ENCODE measurements at regions of chr15 and their contacts with region 1.

Region 1: DNA sequence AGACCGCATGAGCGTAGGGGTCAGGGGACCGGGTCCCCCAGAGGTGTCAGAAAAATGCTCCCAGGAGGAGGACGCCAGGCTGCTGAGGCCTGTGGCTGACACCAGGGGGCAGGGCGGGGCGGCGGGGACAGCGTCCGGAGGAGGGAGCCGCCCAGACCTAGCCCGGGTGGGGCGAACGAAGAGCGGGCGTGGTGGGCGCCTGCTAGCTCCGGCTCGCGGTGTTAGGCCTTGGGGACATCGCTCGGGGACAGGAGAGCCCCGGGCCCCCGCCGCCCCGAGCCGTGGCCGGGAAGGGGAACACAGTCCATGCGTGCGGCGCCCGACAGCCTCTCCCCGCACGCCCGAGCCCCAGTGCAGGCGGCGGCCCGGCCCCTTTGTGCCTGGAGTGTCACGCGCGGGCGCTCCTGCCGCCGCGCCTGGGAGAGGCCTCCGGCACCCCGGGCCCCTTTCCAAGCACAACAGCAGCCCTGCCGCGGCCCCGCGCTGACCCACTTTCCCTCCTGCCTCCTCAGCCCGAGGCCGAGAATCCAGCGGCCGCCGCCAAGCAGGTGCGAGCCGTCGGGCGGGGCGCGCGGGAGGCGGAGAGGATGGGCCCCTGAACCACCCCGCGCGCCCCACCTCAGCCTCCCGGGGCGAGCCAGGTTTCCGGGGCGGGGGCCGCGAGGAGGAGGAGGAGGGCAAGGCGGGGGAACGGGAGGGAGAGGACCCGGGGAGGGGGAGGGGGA is 111.0 kb upstream of the KLF13 start:
- DNase-seq: peak; percentile 53 to 84 (median 69)
- ATAC-seq: peak; percentile 84
- H3K4me3 ChIP-seq: peak overlapping the region; percentile 30
- H3K4me3 Mint-ChIP-seq: peak overlapping the region; percentile 50 to 90 (median 74)
- H3K27ac ChIP-seq: peak overlapping the region; percentile 76
- H3K27ac Mint-ChIP-seq: peak overlapping the region; percentile 84 to 91 (median 87)
- H3K4me1 ChIP-seq: peaks cover 11 to 14% of the 10 kb centered on the region in 2 donors
- H3K4me1 Mint-ChIP-seq: peaks cover 5 to 54% (median 41%) of the 10 kb centered on the region in 7 donors
- H3K27me3 ChIP-seq: no peaks in the 10 kb centered on the region
- H3K27me3 Mint-ChIP-seq: no peaks in the 10 kb centered on the region

Region 2: GRCh38 chr15:30859091-30859874 is 356.4 kb before region 1 on chr15:
- CTCF ChIA-PET with region 1: no interaction called
- POLR2A ChIA-PET with region 1: no interaction called
- intact Hi-C with region 1: no loop called
- DNase-seq: peak in 6 of 9 donors; percentile 13 to 44 (median 36)
- ATAC-seq: peak; percentile 60
- H3K4me3 ChIP-seq: no peak overlapping the region
- H3K4me3 Mint-ChIP-seq: no peak overlapping the region
- H3K27ac ChIP-seq: no peak overlapping the region
- H3K27ac Mint-ChIP-seq: no peak overlapping the region
- H3K4me1 ChIP-seq: no peaks in the 10 kb centered on the region
- H3K4me1 Mint-ChIP-seq: peaks cover 4 to 14% (median 9%) of the 10 kb centered on the region in 7 donors
- H3K27me3 ChIP-seq: no peaks in the 10 kb centered on the region
- H3K27me3 Mint-ChIP-seq: no peaks in the 10 kb centered on the region

Region 3: GRCh38 chr15:31200735-31201151 is 14.9 kb before region 1 on chr15:
- CTCF ChIA-PET with region 1: interaction called, 32 read pairs
- POLR2A ChIA-PET with region 1: interaction called, 9 read pairs
- intact Hi-C with region 1: loop called in 1 of 2 experiments (anchors 1 kb)
- DNase-seq: peak; percentile 45 to 81 (median 72)
- ATAC-seq: peak; percentile 77
- H3K4me3 ChIP-seq: no peak overlapping the region
- H3K4me3 Mint-ChIP-seq: no peak overlapping the region
- H3K27ac ChIP-seq: no peak overlapping the region
- H3K27ac Mint-ChIP-seq: peak overlapping the region in 3 of 9 donors; percentile 4 to 77 (median 38)
- H3K4me1 ChIP-seq: peaks cover 0 to 31% of the 10 kb centered on the region in 2 donors
- H3K4me1 Mint-ChIP-seq: peaks cover 10 to 48% (median 36%) of the 10 kb centered on the region in 7 donors
- H3K27me3 ChIP-seq: no peaks in the 10 kb centered on the region
- H3K27me3 Mint-ChIP-seq: peaks cover 0 to 33% (median 0%) of the 10 kb centered on the region in 5 donors

Region 4: GRCh38 chr15:31228985-31229826 is 13.6 kb after region 1 on chr15:
- CTCF ChIA-PET with region 1: interaction called, 3 read pairs
- POLR2A ChIA-PET with region 1: interaction called, 5 read pairs
- intact Hi-C with region 1: loop called in 1 of 2 experiments (anchors 1 kb)
- DNase-seq: no peak
- ATAC-seq: peak; percentile 46
- H3K4me3 ChIP-seq: no peak overlapping the region
- H3K4me3 Mint-ChIP-seq: no peak overlapping the region
- H3K27ac ChIP-seq: no peak overlapping the region
- H3K27ac Mint-ChIP-seq: no peak overlapping the region
- H3K4me1 ChIP-seq: peaks cover 0 to 6% of the 10 kb centered on the region in 2 donors
- H3K4me1 Mint-ChIP-seq: peaks cover 11 to 28% (median 13%) of the 10 kb centered on the region in 7 donors
- H3K27me3 ChIP-seq: no peaks in the 10 kb centered on the region
- H3K27me3 Mint-ChIP-seq: peaks cover 0 to 23% (median 0%) of the 10 kb centered on the region in 5 donors

Region 5: GRCh38 chr15:31241888-31242522 is 26.4 kb after region 1 on chr15:
- CTCF ChIA-PET with region 1: interaction called, 4 read pairs
- POLR2A ChIA-PET with region 1: interaction called, 6 read pairs
- intact Hi-C with region 1: loop called (anchors 1 kb)
- DNase-seq: peak in 5 of 9 donors; percentile 47 to 78 (median 65)
- ATAC-seq: peak; percentile 95
- H3K4me3 ChIP-seq: no peak overlapping the region
- H3K4me3 Mint-ChIP-seq: peak overlapping the region; percentile 2 to 74 (median 50)
- H3K27ac ChIP-seq: peak overlapping the region; percentile 32
- H3K27ac Mint-ChIP-seq: peak overlapping the region; percentile 36 to 97 (median 90)
- H3K4me1 ChIP-seq: peaks cover 13 to 28% of the 10 kb centered on the region in 2 donors
- H3K4me1 Mint-ChIP-seq: peaks cover 34 to 49% (median 42%) of the 10 kb centered on the region in 7 donors
- H3K27me3 ChIP-seq: no peaks in the 10 kb centered on the region
- H3K27me3 Mint-ChIP-seq: peaks cover 0 to 3% (median 0%) of the 10 kb centered on the region in 5 donors

Region 6: GRCh38 chr15:31280046-31280830 is 64.6 kb after region 1 on chr15:
- CTCF ChIA-PET with region 1: no interaction called
- POLR2A ChIA-PET with region 1: no interaction called
- intact Hi-C with region 1: no loop called
- DNase-seq: peak in 2 of 9 donors; percentile 1 to 12
- ATAC-seq: no peak
- H3K4me3 ChIP-seq: no peak overlapping the region
- H3K4me3 Mint-ChIP-seq: no peak overlapping the region
- H3K27ac ChIP-seq: no peak overlapping the region
- H3K27ac Mint-ChIP-seq: peak overlapping the region in 3 of 9 donors; percentile 28 to 73 (median 41)
- H3K4me1 ChIP-seq: no peaks in the 10 kb centered on the region
- H3K4me1 Mint-ChIP-seq: peaks cover 0 to 30% (median 16%) of the 10 kb centered on the region in 7 donors
- H3K27me3 ChIP-seq: no peaks in the 10 kb centered on the region
- H3K27me3 Mint-ChIP-seq: peaks cover 0 to 25% (median 0%) of the 10 kb centered on the region in 5 donors

Region 7: DNA sequence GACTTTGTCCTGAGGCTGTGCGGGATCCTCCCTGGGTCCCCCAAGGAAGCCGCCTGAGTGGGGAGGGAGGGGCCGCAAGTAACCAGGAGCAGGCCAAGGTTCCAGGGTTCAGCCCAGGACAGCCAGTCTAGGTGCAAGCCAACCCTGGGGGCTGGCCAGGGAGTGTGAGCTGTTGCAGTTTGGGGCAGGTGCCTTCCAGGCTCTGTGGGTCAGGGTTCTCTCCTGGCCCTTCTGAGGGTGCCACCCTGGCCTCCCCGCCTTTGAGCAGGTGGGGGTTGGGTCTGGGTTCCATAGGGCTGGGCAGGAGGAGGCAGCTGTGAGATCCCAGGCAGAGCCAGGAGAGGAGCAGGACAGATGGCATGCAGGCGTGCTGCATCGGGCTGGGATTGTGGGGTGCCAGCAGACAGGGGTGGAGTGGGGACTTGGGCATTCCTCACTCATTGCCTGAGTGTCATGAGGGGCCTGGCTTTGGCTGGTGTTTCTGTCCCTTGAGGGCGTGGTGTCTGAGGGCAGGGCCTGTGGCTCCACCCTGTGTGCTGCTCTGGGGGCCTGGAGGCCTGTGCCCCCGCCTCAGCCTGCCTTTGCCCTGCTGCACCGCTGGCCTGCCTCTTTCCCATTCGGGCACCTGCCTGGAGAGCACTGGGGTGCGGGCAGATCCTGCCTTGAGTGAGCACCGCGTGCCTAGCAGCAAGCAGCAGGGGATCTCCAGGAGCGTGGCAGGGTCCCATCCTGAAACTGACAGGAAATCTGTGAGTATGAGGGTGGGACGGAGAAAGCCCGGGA is 129.4 kb after region 1 on chr15:
- CTCF ChIA-PET with region 1: no interaction called
- POLR2A ChIA-PET with region 1: interaction called, 4 read pairs
- intact Hi-C with region 1: loop called in 1 of 2 experiments (anchors 2 kb)
- DNase-seq: no peak
- ATAC-seq: no peak
- H3K4me3 ChIP-seq: peak overlapping the region; percentile 44
- H3K4me3 Mint-ChIP-seq: peak overlapping the region; percentile 75 to 94 (median 85)
- H3K27ac ChIP-seq: peak overlapping the region; percentile 94
- H3K27ac Mint-ChIP-seq: peak overlapping the region; percentile 75 to 99 (median 97)
- H3K4me1 ChIP-seq: peaks cover 98 to 100% of the 10 kb centered on the region in 2 donors
- H3K4me1 Mint-ChIP-seq: peaks cover 79 to 100% (median 98%) of the 10 kb centered on the region in 7 donors
- H3K27me3 ChIP-seq: no peaks in the 10 kb centered on the region
- H3K27me3 Mint-ChIP-seq: no peaks in the 10 kb centered on the region

Region 8: GRCh38 chr15:32657198-32657883 is 1441.7 kb after region 1 on chr15:
- CTCF ChIA-PET with region 1: no interaction called
- POLR2A ChIA-PET with region 1: no interaction called
- intact Hi-C with region 1: no loop called
- DNase-seq: peak in 2 of 9 donors; percentile 3 to 9
- ATAC-seq: no peak
- H3K4me3 ChIP-seq: no peak overlapping the region
- H3K4me3 Mint-ChIP-seq: peak overlapping the region in 4 of 10 donors; percentile 3 to 62 (median 25)
- H3K27ac ChIP-seq: no peak overlapping the region
- H3K27ac Mint-ChIP-seq: peak overlapping the region in 2 of 9 donors; percentile 18 to 69
- H3K4me1 ChIP-seq: peaks cover 0 to 6% of the 10 kb centered on the region in 2 donors
- H3K4me1 Mint-ChIP-seq: peaks cover 4 to 20% (median 8%) of the 10 kb centered on the region in 7 donors
- H3K27me3 ChIP-seq: no peaks in the 10 kb centered on the region
- H3K27me3 Mint-ChIP-seq: no peaks in the 10 kb centered on the region

Measured in naive thymus-derived CD4-positive, alpha-beta T cell (primary cell).